ENCODE measurements at regions of chr12 and their contacts with region 1.

Region 1: DNA sequence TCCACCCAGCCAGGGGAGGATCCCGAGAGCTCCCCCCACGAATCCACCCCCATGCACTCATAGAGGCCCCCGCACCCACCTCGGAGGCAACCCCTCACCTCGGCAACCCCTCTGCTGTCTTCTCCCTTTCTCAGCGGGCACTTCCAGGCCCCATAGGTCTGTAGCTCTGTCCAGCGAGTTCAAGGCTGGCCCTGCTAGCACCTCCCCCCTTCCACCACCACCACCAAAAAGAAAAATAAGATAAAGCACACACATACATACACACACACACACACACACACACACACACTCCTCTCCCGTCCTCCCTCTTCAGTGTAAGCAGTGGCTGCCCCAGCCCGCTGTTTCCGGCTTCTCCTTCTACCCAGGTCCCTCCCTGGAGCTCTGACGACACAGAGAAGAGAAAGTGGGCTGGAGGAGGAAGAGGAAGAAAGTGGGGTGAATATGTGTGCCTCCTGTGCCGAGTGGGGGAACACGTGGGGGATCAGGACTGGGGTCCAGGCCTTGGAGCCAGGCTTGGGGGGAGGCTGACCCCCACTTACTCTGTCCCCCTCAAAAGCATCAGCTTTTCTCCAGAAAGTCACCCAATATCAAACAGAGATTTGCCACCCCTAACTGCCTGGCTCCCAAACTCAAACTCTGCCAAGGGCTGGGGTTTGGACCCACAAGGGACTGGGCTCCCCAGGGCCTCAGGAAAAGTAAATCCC is at the start of gene STAT6:
- DNase-seq: peak; percentile 53 to 94 (median 87)
- ATAC-seq: peak; percentile 77
- H3K4me3 ChIP-seq: peak within 1 kb of the TSS; percentile 75
- H3K4me3 Mint-ChIP-seq: peak within 1 kb of the TSS; percentile 89 to 100 (median 98)
- H3K27ac ChIP-seq: peak within 1 kb of the TSS; percentile 92
- H3K27ac Mint-ChIP-seq: peak within 1 kb of the TSS; percentile 93 to 100 (median 97)
- H3K4me1 ChIP-seq: peaks cover 12 to 26% of the 10 kb centered on the region in 2 donors
- H3K4me1 Mint-ChIP-seq: peaks cover 41 to 54% (median 46%) of the 10 kb centered on the region in 7 donors
- H3K27me3 ChIP-seq: no peaks in the 10 kb centered on the region
- H3K27me3 Mint-ChIP-seq: no peaks in the 10 kb centered on the region
- total RNA-seq, gene STAT6: 206 to 403 (median 294) TPM

Region 2: GRCh38 chr12:56636675-56637540 is 474.3 kb before region 1 on chr12:
- CTCF ChIA-PET with region 1: interaction called, 3 read pairs
- POLR2A ChIA-PET with region 1: interaction called, 4 read pairs
- intact Hi-C with region 1: loop called in 1 of 2 experiments (anchors 5 kb)
- DNase-seq: peak; percentile 86 to 99 (median 94)
- ATAC-seq: peak; percentile 83
- H3K4me3 ChIP-seq: peak overlapping the region; percentile 73
- H3K4me3 Mint-ChIP-seq: peak overlapping the region; percentile 87 to 100 (median 96)
- H3K27ac ChIP-seq: peak overlapping the region; percentile 83
- H3K27ac Mint-ChIP-seq: peak overlapping the region; percentile 89 to 99 (median 97)
- H3K4me1 ChIP-seq: peaks cover 27 to 36% of the 10 kb centered on the region in 2 donors
- H3K4me1 Mint-ChIP-seq: peaks cover 28 to 69% (median 57%) of the 10 kb centered on the region in 7 donors
- H3K27me3 ChIP-seq: no peaks in the 10 kb centered on the region
- H3K27me3 Mint-ChIP-seq: no peaks in the 10 kb centered on the region

Region 3: DNA sequence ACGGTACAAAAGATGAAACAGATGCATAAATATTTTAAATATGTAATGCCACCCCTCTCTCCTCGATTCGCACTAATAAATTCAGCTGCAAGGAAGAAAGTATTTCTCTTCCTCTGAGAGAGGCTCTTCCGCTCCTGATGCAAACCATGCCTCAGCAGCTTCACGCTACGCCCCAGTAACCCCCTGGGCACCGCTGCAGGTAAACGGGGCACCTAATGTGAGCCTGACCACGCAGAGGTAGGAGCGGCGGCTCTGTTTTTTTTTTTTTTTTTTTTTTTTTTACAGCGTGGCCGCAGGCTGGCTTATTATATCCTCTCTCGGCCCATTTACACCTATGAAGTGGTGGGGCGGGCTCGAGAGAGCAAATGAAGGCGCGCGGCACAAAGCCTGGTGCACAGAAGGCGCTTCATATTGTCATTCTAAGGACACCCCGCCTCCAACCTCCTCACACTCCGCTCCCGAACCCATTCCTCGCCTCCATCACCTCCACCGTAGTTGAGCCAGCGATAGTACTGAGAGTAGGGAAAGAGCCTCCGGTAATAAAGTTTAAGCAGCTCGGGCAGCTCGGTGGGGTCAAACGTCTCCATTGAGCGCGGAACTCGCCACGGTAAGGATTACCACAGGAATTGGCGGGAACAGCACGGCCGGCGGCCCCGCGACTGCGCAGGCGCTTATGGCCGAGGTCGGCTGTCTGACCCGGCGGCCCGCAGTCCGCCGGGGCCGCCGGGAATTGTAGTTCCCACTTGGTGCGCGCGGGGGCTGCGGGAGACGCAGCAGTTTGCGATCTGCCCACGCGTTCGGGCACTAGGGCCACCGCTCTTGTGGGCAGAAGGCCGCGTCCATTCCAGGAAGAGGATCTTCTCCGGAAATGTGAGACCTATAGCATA is 359.2 kb before region 1 on chr12 and contains the start of gene PRIM1:
- CTCF ChIA-PET with region 1: interaction called, 7 read pairs
- POLR2A ChIA-PET with region 1: interaction called, 8 read pairs
- intact Hi-C with region 1: loop called (anchors 1 kb)
- DNase-seq: peak; percentile 69 to 91 (median 78)
- ATAC-seq: peak; percentile 93
- H3K4me3 ChIP-seq: peak within 1 kb of the TSS; percentile 98
- H3K4me3 Mint-ChIP-seq: peak within 1 kb of the TSS; percentile 88 to 98 (median 97)
- H3K27ac ChIP-seq: peak within 1 kb of the TSS; percentile 81
- H3K27ac Mint-ChIP-seq: peak within 1 kb of the TSS; percentile 80 to 99 (median 93)
- H3K4me1 ChIP-seq: peaks cover 3 to 7% of the 10 kb centered on the region in 2 donors
- H3K4me1 Mint-ChIP-seq: peaks cover 22 to 46% (median 42%) of the 10 kb centered on the region in 7 donors
- H3K27me3 ChIP-seq: no peaks in the 10 kb centered on the region
- H3K27me3 Mint-ChIP-seq: no peaks in the 10 kb centered on the region
- total RNA-seq, gene PRIM1: 11.5 to 39.8 (median 26.2) TPM

Region 4: GRCh38 chr12:57063991-57064685 is 47.0 kb before region 1 on chr12:
- CTCF ChIA-PET with region 1: interaction called, 212 read pairs
- POLR2A ChIA-PET with region 1: interaction called, 294 read pairs
- intact Hi-C with region 1: loop called (anchors 1 kb)
- DNase-seq: peak in 7 of 9 donors; percentile 67 to 90 (median 85)
- ATAC-seq: peak; percentile 97
- H3K4me3 ChIP-seq: peak overlapping the region; percentile 15
- H3K4me3 Mint-ChIP-seq: peak overlapping the region; percentile 13 to 90 (median 80)
- H3K27ac ChIP-seq: peak overlapping the region; percentile 76
- H3K27ac Mint-ChIP-seq: peak overlapping the region; percentile 79 to 97 (median 91)
- H3K4me1 ChIP-seq: peaks cover 17 to 20% of the 10 kb centered on the region in 2 donors
- H3K4me1 Mint-ChIP-seq: peaks cover 10 to 45% (median 34%) of the 10 kb centered on the region in 7 donors
- H3K27me3 ChIP-seq: no peaks in the 10 kb centered on the region
- H3K27me3 Mint-ChIP-seq: no peaks in the 10 kb centered on the region

Region 5: GRCh38 chr12:57096099-57096572 is 15.0 kb before region 1 on chr12:
- CTCF ChIA-PET with region 1: interaction called, 77 read pairs
- POLR2A ChIA-PET with region 1: interaction called, 401 read pairs
- intact Hi-C with region 1: loop called in 1 of 2 experiments (anchors 1 kb)
- DNase-seq: no peak
- ATAC-seq: no peak
- H3K4me3 ChIP-seq: no peak overlapping the region
- H3K4me3 Mint-ChIP-seq: peak overlapping the region in 1 of 10 donors; percentile 11
- H3K27ac ChIP-seq: peak overlapping the region; percentile 83
- H3K27ac Mint-ChIP-seq: peak overlapping the region in 8 of 9 donors; percentile 47 to 94 (median 64)
- H3K4me1 ChIP-seq: peaks cover 7 to 32% of the 10 kb centered on the region in 2 donors
- H3K4me1 Mint-ChIP-seq: peaks cover 33 to 62% (median 51%) of the 10 kb centered on the region in 7 donors
- H3K27me3 ChIP-seq: no peaks in the 10 kb centered on the region
- H3K27me3 Mint-ChIP-seq: no peaks in the 10 kb centered on the region

Region 6: GRCh38 chr12:57462251-57462911 is 351.2 kb after region 1 on chr12:
- CTCF ChIA-PET with region 1: no interaction called
- POLR2A ChIA-PET with region 1: no interaction called
- intact Hi-C with region 1: loop called in 1 of 2 experiments (anchors 5 kb)
- DNase-seq: peak; percentile 75 to 92 (median 86)
- ATAC-seq: peak; percentile 84
- H3K4me3 ChIP-seq: peak overlapping the region; percentile 56
- H3K4me3 Mint-ChIP-seq: peak overlapping the region; percentile 78 to 93 (median 88)
- H3K27ac ChIP-seq: no peak overlapping the region
- H3K27ac Mint-ChIP-seq: peak overlapping the region; percentile 56 to 91 (median 70)
- H3K4me1 ChIP-seq: peaks cover 21 to 30% of the 10 kb centered on the region in 2 donors
- H3K4me1 Mint-ChIP-seq: peaks cover 35 to 55% (median 42%) of the 10 kb centered on the region in 7 donors
- H3K27me3 ChIP-seq: no peaks in the 10 kb centered on the region
- H3K27me3 Mint-ChIP-seq: peaks cover 0 to 22% (median 8%) of the 10 kb centered on the region in 5 donors